ENCODE measurements at regions of chr11 and their contacts with region 1.

Region 1: GRCh38 chr11:121964591-121964990 is 151.4 kb downstream of the BLID start:
- DNase-seq: no peak
- H3K4me3 ChIP-seq: no peak overlapping the region
- H3K27ac ChIP-seq: no peak overlapping the region
- H3K4me1 ChIP-seq: peaks cover 9% of the 10 kb centered on the region
- H3K27me3 ChIP-seq: peaks cover under 1% of the 10 kb centered on the region
- CTCF ChIP-seq: peak in 1 of 2 donors; percentile 7

Region 2: GRCh38 chr11:121716060-121716459 is 248.5 kb before region 1 on chr11:
- CTCF ChIA-PET with region 1: no interaction called
- dilution Hi-C with region 1: no loop called
- in situ Hi-C with region 1: no loop called
- intact Hi-C with region 1: no loop called
- DNase-seq: no peak
- H3K4me3 ChIP-seq: no peak overlapping the region
- H3K27ac ChIP-seq: no peak overlapping the region
- H3K4me1 ChIP-seq: no peaks in the 10 kb centered on the region
- H3K27me3 ChIP-seq: no peaks in the 10 kb centered on the region
- CTCF ChIP-seq: no peak

Region 3: GRCh38 chr11:121892131-121892681 is 72.4 kb before region 1 on chr11:
- CTCF ChIA-PET with region 1: no interaction called
- dilution Hi-C with region 1: loop called (anchors 5 kb)
- in situ Hi-C with region 1: no loop called
- intact Hi-C with region 1: no loop called
- DNase-seq: peak; percentile 51
- H3K4me3 ChIP-seq: no peak overlapping the region
- H3K27ac ChIP-seq: no peak overlapping the region
- H3K4me1 ChIP-seq: peaks cover 73% of the 10 kb centered on the region
- H3K27me3 ChIP-seq: peaks cover 4% of the 10 kb centered on the region
- CTCF ChIP-seq: no peak

Region 4: GRCh38 chr11:122032317-122032716 is 67.7 kb after region 1 on chr11:
- CTCF ChIA-PET with region 1: no interaction called
- dilution Hi-C with region 1: loop called (anchors 5 kb)
- in situ Hi-C with region 1: no loop called
- intact Hi-C with region 1: no loop called
- DNase-seq: no peak
- H3K4me3 ChIP-seq: no peak overlapping the region
- H3K27ac ChIP-seq: no peak overlapping the region
- H3K4me1 ChIP-seq: no peaks in the 10 kb centered on the region
- H3K27me3 ChIP-seq: no peaks in the 10 kb centered on the region
- CTCF ChIP-seq: no peak

Region 5: GRCh38 chr11:122069707-122070360 is 105.2 kb after region 1 on chr11:
- CTCF ChIA-PET with region 1: no interaction called
- dilution Hi-C with region 1: no loop called
- in situ Hi-C with region 1: no loop called
- intact Hi-C with region 1: no loop called
- DNase-seq: peak; percentile 43
- H3K4me3 ChIP-seq: no peak overlapping the region
- H3K27ac ChIP-seq: no peak overlapping the region
- H3K4me1 ChIP-seq: no peaks in the 10 kb centered on the region
- H3K27me3 ChIP-seq: no peaks in the 10 kb centered on the region
- CTCF ChIP-seq: no peak

Measured in mammary epithelial cell (primary cell).